ENCODE measurements at regions of chrX and their contacts with region 1.

Region 1: DNA sequence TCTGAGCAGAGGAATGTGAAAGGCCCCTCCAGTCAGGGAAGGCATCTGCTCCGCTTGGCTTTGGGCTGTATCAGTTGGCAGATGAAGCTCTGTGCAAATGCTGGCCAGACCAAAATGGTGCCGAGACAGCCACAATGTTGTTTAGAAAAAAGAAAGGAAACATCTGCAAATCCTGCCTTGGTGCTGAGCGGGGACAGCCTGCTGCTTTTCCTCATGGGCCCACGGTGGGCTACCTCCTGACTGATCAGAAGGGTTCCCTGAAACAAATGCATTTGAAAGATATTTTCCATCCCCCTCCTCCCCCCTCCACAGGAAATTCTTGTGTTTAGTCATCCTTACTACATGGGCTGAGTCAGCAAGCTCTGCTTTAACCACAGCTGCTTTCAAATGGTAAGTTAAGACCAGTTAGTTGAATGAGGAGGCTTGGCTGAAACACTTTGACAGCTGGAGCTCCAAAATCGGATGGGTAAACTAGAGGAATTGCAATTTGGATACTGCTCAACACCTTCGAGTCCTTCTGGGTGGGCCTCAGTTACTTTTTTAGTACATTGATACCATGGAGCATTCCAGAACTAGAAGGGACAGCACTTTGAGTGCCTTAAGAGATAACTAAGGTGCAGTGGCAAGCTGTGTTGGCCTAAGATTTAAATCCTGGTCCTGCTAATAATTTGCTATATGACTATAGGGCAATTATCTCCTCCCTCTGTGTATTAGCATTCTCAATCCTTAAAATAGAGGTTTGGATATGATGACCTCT is 36.0 kb downstream of the PLAC1 start:
- DNase-seq: peak; percentile 92
- H3K4me3 ChIP-seq: peak overlapping the region in 1 of 3 experiments; percentile 10
- H3K27ac ChIP-seq: peak overlapping the region; percentile 94
- H3K4me1 ChIP-seq: peaks cover 49% of the 10 kb centered on the region
- H3K27me3 ChIP-seq: no peaks in the 10 kb centered on the region
- CTCF ChIP-seq: no peak
- POLR2A ChIP-seq: no peak

Region 2: GRCh38 chrX:134542485-134542884 is 79.7 kb before region 1 on chrX:
- CTCF ChIA-PET with region 1: no interaction called
- POLR2A ChIA-PET with region 1: no interaction called
- dilution Hi-C with region 1: no loop called
- intact Hi-C with region 1: no loop called
- DNase-seq: no peak
- H3K4me3 ChIP-seq: no peak overlapping the region
- H3K27ac ChIP-seq: no peak overlapping the region
- H3K4me1 ChIP-seq: peaks cover 31% of the 10 kb centered on the region
- H3K27me3 ChIP-seq: no peaks in the 10 kb centered on the region
- CTCF ChIP-seq: no peak
- POLR2A ChIP-seq: no peak

Region 3: GRCh38 chrX:134572816-134573682 is 49.2 kb before region 1 on chrX:
- CTCF ChIA-PET with region 1: no interaction called
- POLR2A ChIA-PET with region 1: no interaction called
- dilution Hi-C with region 1: no loop called
- intact Hi-C with region 1: loop called (anchors 1 kb)
- DNase-seq: no peak
- H3K4me3 ChIP-seq: no peak overlapping the region
- H3K27ac ChIP-seq: no peak overlapping the region
- H3K4me1 ChIP-seq: peaks cover 19% of the 10 kb centered on the region
- H3K27me3 ChIP-seq: no peaks in the 10 kb centered on the region
- CTCF ChIP-seq: no peak
- POLR2A ChIP-seq: no peak

Region 4: DNA sequence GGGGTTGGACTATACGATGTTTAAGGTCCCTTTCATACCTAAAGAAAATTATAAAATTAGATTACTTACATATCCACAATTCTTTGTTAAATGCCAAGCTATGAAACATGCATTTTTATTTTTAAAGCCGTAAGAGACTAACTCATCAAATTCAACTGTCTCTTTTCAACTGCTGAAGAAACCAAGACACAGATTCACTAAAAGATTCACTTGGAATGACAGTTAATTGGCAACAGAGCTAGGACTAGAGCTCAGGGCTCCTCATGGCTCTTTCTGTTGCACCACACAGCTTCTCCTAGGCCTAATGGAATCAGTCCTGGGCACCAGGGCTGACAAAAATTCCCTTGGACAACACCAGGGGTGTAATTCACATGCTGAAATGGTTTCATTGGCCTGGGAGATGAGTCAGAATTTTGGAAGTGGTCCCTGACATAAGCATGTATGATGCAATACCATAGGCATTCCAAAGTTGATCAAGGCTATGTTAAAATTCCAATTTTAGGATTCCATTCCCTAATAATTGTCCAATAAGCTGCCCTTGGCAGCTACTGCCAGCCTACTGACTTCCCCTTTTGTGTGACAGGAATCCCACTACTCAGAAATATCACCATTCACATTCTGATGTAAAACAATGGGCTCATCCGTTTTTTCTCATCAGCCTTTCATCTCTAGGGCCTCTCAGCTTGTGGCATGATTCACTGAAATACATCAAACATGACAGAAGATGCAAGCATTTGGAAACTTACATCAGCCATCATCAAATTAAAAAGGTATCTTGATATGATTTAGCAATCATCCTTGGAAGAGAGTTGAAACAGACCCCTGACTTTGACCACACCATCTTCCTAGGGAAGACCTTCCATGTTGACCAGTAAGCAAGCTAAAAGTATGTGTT is 18.2 kb before region 1 on chrX:
- CTCF ChIA-PET with region 1: interaction called, 9 read pairs
- POLR2A ChIA-PET with region 1: no interaction called
- dilution Hi-C with region 1: no loop called
- intact Hi-C with region 1: loop called (anchors 1 kb)
- DNase-seq: peak; percentile 12
- H3K4me3 ChIP-seq: no peak overlapping the region
- H3K27ac ChIP-seq: peak overlapping the region; percentile 15
- H3K4me1 ChIP-seq: peaks cover 10% of the 10 kb centered on the region
- H3K27me3 ChIP-seq: no peaks in the 10 kb centered on the region
- CTCF ChIP-seq: no peak
- POLR2A ChIP-seq: no peak

Region 5: DNA sequence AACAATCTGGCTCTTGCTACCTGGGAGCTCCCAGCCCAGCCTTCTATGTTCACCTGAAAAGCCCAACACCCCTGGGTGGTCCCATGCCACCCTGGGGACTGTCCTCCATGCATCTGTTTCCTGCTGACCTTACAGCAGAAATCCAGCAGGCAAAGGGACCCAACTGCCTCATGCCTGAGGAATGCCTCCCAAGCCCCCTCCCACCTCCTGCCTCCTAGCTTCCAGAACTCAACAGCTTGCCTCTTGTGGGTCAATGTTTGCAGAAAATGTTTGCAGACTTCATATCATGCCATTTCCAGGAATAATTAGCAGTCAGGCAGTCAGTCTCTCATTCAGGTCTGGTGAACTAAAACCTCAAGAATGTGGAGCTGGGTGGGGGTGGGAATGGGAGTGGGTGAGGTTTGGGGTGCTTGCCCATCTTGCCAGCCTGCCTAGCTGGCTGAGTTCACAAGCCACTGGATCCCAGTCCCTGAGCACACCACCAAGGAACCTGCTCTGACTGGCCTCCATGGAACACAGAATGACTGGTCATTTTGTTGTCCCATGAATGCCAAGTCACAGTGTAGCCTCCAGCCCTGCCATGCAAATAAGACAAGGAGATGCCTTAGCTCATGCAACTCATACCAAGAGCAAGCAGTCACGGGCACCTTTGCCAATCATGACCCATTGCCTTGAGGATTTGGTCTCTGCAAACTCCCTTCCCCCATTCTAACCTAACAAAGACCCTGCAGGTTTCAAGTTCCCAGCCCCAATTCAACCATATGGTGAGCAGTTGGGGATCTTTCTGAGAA is 48.1 kb after region 1 on chrX:
- CTCF ChIA-PET with region 1: no interaction called
- POLR2A ChIA-PET with region 1: no interaction called
- dilution Hi-C with region 1: no loop called
- intact Hi-C with region 1: loop called (anchors 1 kb)
- DNase-seq: peak; percentile 29
- H3K4me3 ChIP-seq: no peak overlapping the region
- H3K27ac ChIP-seq: peak overlapping the region; percentile 87
- H3K4me1 ChIP-seq: peaks cover 27% of the 10 kb centered on the region
- H3K27me3 ChIP-seq: no peaks in the 10 kb centered on the region
- CTCF ChIP-seq: no peak
- POLR2A ChIP-seq: no peak

Region 6: DNA sequence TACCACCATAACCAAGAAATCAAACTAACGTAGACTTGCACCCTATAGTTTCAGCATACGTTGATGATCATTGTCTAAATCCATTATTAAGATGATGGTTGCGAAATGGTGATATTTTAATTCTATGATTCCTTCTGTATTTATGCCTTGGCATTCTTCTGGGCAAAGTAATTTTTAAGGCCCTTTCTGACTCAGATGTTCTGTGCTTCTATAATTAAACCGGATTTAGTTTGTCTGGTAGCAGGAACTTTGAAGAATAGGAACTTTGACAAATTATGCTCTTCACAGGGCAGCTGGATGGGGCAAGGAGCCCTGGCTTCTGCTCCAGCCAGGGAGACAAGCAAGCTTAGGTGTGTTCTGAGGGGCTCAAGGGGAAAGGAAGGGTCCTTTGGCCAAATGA is 59.8 kb after region 1 on chrX:
- CTCF ChIA-PET with region 1: no interaction called
- POLR2A ChIA-PET with region 1: no interaction called
- dilution Hi-C with region 1: no loop called
- intact Hi-C with region 1: no loop called
- DNase-seq: no peak
- H3K4me3 ChIP-seq: no peak overlapping the region
- H3K27ac ChIP-seq: no peak overlapping the region
- H3K4me1 ChIP-seq: peaks cover 7% of the 10 kb centered on the region
- H3K27me3 ChIP-seq: no peaks in the 10 kb centered on the region
- CTCF ChIP-seq: no peak
- POLR2A ChIP-seq: no peak

Region 7: DNA sequence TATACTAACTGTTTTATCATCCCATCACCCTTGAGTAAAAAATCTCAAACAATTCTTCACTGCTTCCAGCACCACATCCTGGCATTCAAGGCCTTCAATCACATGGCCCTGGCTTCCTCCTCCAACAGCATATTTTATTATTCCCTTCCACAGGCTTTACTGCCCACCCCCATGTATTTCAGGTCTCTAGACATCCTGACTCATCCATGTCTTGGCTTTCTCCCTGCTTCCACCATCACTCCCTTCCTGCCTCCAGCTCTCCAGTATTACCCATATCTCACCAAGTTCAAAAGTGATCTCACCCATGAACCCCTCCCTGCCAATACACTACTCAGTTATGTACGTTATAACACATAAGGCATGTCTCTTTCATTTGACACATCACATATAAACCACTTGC is 70.8 kb after region 1 on chrX:
- CTCF ChIA-PET with region 1: no interaction called
- POLR2A ChIA-PET with region 1: no interaction called
- dilution Hi-C with region 1: no loop called
- intact Hi-C with region 1: loop called (anchors 2 kb)
- DNase-seq: peak; percentile 68
- H3K4me3 ChIP-seq: no peak overlapping the region
- H3K27ac ChIP-seq: peak overlapping the region; percentile 68
- H3K4me1 ChIP-seq: peaks cover 44% of the 10 kb centered on the region
- H3K27me3 ChIP-seq: no peaks in the 10 kb centered on the region
- CTCF ChIP-seq: no peak
- POLR2A ChIP-seq: no peak

Region 8: GRCh38 chrX:134745636-134746409 is 123.6 kb after region 1 on chrX:
- CTCF ChIA-PET with region 1: no interaction called
- POLR2A ChIA-PET with region 1: no interaction called
- dilution Hi-C with region 1: no loop called
- intact Hi-C with region 1: loop called (anchors 2 kb)
- DNase-seq: peak; percentile 51
- H3K4me3 ChIP-seq: no peak overlapping the region
- H3K27ac ChIP-seq: peak overlapping the region; percentile 71
- H3K4me1 ChIP-seq: peaks cover 19% of the 10 kb centered on the region
- H3K27me3 ChIP-seq: no peaks in the 10 kb centered on the region
- CTCF ChIP-seq: no peak
- POLR2A ChIP-seq: no peak